AG04449 (cell line): ENCODE measurements at regions of chr2 and their contacts with region 1.

Region 1: DNA sequence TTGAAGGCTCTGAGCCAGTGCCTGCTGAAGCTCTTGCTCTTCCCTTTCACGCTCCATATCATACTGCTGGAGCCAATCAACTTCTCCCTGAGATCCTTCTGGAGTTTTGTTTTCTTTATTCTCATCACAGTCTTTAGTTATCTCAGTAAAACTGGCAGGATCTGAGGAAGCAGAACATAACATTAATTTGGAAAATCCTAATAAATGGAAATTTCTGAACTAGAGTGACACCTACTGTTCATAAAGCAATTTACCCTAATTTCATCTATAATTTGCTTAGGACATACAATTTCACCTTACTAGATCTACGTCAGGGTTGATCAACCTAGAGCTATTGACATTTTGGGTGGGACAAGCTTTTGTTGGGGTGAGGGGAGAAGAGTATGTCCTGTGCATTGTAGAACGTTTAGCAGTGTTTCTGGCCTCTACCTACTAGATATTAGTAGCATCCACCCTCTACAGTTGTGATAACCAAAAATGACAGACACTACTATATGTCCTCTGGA is 47.1 kb downstream of the VIL1 start:
- DNase-seq: no peak
- H3K4me3 ChIP-seq: no peak overlapping the region
- CTCF ChIP-seq: no peak

Region 2: GRCh38 chr2:218269899-218270720 is 196.0 kb before region 1 on chr2 and contains the starts of genes AAMP and PNKD:
- CTCF ChIA-PET with region 1: interaction called, 50 read pairs
- POLR2A ChIA-PET with region 1: no interaction called
- DNase-seq: peak; percentile 94
- H3K4me3 ChIP-seq: peak within 1 kb of the TSS; percentile 97
- CTCF ChIP-seq: peak; percentile 18

Region 3: GRCh38 chr2:218301176-218301819 is 164.8 kb before region 1 on chr2:
- CTCF ChIA-PET with region 1: interaction called, 21 read pairs
- POLR2A ChIA-PET with region 1: no interaction called
- DNase-seq: no peak
- H3K4me3 ChIP-seq: no peak overlapping the region
- CTCF ChIP-seq: peak; percentile 88

Region 4: DNA sequence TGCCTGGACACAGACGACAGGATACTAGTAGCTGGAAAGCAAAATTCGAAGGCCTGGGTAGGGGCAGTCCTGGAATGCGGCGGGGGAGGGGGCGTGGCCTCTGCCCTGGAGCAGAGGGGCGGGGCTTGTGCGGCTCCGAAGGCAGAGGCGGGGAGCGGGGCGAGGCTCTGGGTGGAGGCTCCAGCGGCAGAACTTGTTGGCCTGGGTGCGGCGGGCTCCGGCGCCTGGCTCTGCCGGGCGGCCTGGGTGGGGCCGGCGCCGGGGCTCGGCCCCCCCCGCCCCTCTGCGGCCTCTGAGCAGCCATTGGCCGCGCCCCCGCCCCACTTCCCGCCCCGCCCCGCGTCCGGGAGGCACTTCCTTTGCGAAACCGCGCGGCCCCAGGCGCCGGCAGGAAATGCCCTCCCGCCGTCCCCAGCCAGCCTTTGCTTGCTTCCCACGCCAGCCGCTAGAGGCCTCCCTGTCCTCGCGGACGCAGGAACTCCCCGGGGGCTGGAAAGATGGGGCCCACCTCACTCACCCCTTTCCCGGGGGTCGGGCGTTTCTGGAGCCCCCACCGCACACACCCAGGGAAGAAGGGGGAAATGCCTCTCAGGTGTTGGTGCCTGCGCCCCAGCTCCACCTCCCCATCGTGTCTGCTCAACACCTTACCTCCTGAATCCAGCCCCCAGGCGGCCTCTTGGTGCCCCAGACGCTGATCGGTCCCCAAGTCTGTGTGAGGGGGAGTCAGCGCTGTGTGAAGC is 59.7 kb before region 1 on chr2:
- CTCF ChIA-PET with region 1: interaction called, 22 read pairs
- POLR2A ChIA-PET with region 1: no interaction called
- DNase-seq: peak; percentile 57
- H3K4me3 ChIP-seq: peak overlapping the region; percentile 54
- CTCF ChIP-seq: peak; percentile 95

Region 5: DNA sequence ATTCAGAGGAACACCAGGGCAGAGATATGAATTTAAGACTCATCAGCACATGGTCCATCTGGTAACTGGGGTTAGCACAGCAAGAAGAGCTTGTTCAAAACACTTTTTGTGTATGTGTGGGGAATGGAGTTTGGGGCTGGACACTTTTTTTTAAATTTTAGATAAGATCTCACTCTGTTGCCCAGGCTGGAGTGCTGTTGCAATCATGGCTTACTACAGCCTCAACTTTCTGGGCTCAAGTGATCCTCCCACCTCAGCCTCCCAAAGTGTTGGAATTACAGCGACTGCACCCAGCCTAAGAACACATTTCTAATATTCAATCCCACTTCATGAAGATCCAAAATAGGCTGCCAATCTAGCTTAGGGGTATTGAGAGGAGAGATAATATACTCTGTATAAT is 23.7 kb before region 1 on chr2:
- CTCF ChIA-PET with region 1: interaction called, 15 read pairs
- POLR2A ChIA-PET with region 1: no interaction called
- DNase-seq: no peak
- H3K4me3 ChIP-seq: no peak overlapping the region
- CTCF ChIP-seq: no peak

Region 6: DNA sequence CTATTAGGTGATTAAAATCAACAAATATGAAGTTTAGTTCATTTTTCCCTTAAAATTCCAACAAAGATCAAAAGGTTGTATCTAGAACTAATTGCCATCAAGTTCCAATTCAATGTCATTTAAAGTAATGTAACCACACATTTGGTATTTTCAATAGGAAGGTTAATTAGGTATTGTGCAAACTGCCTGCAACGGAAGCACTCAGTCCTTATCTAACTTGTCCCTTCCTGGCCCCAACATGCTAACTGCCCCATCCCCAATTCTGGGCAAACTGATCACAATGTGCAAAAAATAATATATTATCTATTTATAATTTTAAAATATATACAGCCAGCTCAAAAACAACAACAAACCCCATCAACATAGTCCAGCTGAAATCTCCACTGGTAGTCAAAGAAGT is 14.0 kb before region 1 on chr2:
- CTCF ChIA-PET with region 1: interaction called, 55 read pairs
- POLR2A ChIA-PET with region 1: no interaction called
- DNase-seq: no peak
- H3K4me3 ChIP-seq: no peak overlapping the region
- CTCF ChIP-seq: no peak

Region 7: GRCh38 chr2:218476676-218477075 is 10.6 kb after region 1 on chr2:
- CTCF ChIA-PET with region 1: interaction called, 23 read pairs
- POLR2A ChIA-PET with region 1: no interaction called
- DNase-seq: no peak
- H3K4me3 ChIP-seq: no peak overlapping the region
- CTCF ChIP-seq: no peak

Region 8: DNA sequence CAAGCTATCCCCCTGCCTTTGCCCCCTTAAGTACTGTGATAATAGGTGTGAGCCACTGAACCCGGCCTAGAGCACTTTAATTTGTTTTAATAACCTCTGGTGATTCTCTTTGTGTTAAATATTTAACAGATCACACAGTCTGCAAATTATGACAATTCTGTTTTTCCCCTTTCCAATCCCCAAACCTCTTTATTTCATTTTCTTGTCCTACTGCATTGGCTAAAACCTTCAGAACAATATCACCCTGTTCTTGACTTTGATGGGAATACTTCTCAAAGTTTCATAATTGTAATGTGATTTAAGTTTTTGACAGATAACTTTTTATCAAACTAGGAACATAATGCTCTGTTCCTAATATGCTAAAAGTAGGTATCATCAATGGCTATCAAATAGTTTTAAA is 57.6 kb after region 1 on chr2:
- CTCF ChIA-PET with region 1: no interaction called
- POLR2A ChIA-PET with region 1: no interaction called
- DNase-seq: no peak
- H3K4me3 ChIP-seq: no peak overlapping the region
- CTCF ChIP-seq: no peak

Region 9: GRCh38 chr2:218648088-218648786 is 182.2 kb after region 1 on chr2:
- CTCF ChIA-PET with region 1: no interaction called
- POLR2A ChIA-PET with region 1: no interaction called
- DNase-seq: no peak
- H3K4me3 ChIP-seq: no peak overlapping the region
- CTCF ChIP-seq: peak; percentile 84

Region 10: GRCh38 chr2:218756599-218757377 is 290.7 kb after region 1 on chr2:
- CTCF ChIA-PET with region 1: no interaction called
- POLR2A ChIA-PET with region 1: no interaction called
- DNase-seq: no peak
- H3K4me3 ChIP-seq: no peak overlapping the region
- CTCF ChIP-seq: no peak